WTC11 (cell line): ENCODE measurements at regions of chr16 and their contacts with region 1.

Region 1: DNA sequence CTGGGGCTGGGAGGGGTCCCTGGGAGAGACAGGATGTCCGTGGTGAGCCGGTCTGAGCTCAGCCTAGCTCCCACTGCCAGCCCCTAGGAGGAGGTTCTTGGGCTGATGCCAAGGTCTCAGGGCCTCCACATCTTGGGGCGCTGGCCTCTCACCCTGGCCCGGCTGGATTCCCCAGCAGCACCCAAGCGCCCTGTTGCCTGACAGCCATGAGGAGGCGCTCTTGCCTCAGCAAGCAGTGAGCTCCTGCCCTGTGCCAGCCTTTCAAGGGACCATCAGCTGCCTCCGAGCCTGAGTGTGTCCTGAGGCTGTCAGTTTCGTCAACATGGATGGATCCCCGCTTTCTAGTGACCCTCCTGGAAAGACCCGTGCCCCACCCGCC is 234.9 kb upstream of the CIBAR2 start:
- DNase-seq: peak; percentile 77
- ATAC-seq: peak; percentile 85
- H3K4me3 Mint-ChIP-seq: no peak overlapping the region
- H3K27ac Mint-ChIP-seq: no peak overlapping the region
- H3K4me1 Mint-ChIP-seq: peaks cover 10% of the 10 kb centered on the region
- H3K27me3 Mint-ChIP-seq: no peaks in the 10 kb centered on the region; the same call in 1 of the 2 replicates
- CTCF ChIP-seq: peak; percentile 63; the same call in 1 of the 2 replicates

Region 2: DNA sequence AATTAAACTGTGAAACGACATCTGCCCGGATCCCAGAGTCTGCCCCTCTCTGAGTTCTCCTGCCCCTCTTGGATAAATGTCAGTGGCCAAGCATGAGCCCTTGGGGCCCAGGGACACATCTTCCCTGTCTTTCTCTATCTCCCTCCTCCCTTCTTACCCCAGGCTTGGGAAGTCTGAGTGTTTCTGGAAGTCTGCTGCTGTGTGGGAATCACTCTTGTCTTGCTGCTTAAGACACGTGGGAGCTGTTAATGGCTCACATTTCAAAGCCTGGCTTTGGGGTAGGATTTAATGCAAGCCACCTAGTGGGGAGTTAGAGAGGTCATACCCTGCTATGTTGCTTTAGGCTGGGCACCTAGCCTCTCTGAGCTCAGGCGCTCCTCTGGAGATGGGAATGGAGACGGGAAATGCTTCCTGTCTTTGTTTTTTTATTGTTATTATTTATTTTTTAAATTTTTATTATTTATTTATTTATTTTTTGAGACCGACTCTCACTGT is 16.5 kb before region 1 on chr16:
- CTCF ChIA-PET with region 1: interaction called, 33 read pairs
- POLR2A ChIA-PET with region 1: no interaction called
- DNase-seq: no peak
- ATAC-seq: peak; percentile 32
- H3K4me3 Mint-ChIP-seq: peak overlapping the region; percentile 53
- H3K27ac Mint-ChIP-seq: peak overlapping the region; percentile 47; the same call in 1 of the 2 replicates
- H3K4me1 Mint-ChIP-seq: peaks cover 73% of the 10 kb centered on the region
- H3K27me3 Mint-ChIP-seq: peaks cover 52% of the 10 kb centered on the region
- CTCF ChIP-seq: no peak

Region 3: GRCh38 chr16:85363881-85364280 is 16.7 kb after region 1 on chr16:
- CTCF ChIA-PET with region 1: interaction called, 15 read pairs
- POLR2A ChIA-PET with region 1: no interaction called
- DNase-seq: no peak
- ATAC-seq: no peak
- H3K4me3 Mint-ChIP-seq: no peak overlapping the region
- H3K27ac Mint-ChIP-seq: no peak overlapping the region
- H3K4me1 Mint-ChIP-seq: peaks cover 23% of the 10 kb centered on the region
- H3K27me3 Mint-ChIP-seq: peaks cover 9% of the 10 kb centered on the region
- CTCF ChIP-seq: no peak

Region 4: DNA sequence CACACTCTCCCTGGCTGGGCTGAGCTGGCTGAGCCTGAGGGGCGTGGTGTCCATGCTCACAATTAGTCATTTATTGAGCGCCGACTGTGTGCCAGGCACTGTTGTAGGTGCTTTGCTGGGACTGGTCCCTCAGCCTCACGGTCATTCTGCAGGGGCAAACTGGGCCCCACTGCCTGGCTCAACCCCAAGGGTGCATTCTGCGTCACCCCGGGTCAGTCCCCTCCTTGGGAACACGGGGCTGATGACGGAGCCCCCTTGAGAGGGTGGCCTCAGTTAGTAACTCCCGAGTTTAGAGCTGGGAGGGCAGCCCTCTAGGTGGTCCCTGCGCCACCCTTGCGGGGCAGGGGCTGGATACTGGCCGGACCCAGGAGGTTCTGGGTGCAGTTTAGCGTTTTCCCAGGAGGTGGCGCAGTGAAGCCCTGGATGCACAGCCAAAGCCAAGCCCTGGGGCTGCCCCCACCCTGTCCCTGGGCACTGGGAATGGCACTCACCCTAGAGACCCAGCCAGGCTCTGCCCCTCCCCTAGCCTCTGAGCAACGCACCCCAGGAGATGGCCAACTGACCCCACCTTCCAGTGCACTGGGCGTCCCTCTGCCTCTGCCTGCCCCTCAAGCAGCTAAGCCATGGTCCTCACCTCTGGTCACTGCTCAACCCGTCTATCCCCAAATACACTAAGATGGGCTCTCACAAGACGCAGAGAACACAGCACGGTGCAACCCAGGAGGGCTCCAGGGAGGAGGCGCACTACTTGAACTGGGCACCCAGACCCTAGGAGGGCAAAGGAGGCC is 22.7 kb after region 1 on chr16:
- CTCF ChIA-PET with region 1: interaction called, 15 read pairs
- POLR2A ChIA-PET with region 1: no interaction called
- DNase-seq: peak; percentile 84
- ATAC-seq: peak; percentile 73
- H3K4me3 Mint-ChIP-seq: no peak overlapping the region
- H3K27ac Mint-ChIP-seq: no peak overlapping the region
- H3K4me1 Mint-ChIP-seq: peaks cover 21% of the 10 kb centered on the region
- H3K27me3 Mint-ChIP-seq: peaks cover 9% of the 10 kb centered on the region
- CTCF ChIP-seq: peak; percentile 85

Region 5: GRCh38 chr16:85393674-85394483 is 46.7 kb after region 1 on chr16:
- CTCF ChIA-PET with region 1: interaction called, 45 read pairs
- POLR2A ChIA-PET with region 1: no interaction called
- DNase-seq: peak; percentile 89
- ATAC-seq: peak; percentile 68
- H3K4me3 Mint-ChIP-seq: peak overlapping the region; percentile 38
- H3K27ac Mint-ChIP-seq: no peak overlapping the region
- H3K4me1 Mint-ChIP-seq: peaks cover 43% of the 10 kb centered on the region
- H3K27me3 Mint-ChIP-seq: no peaks in the 10 kb centered on the region
- CTCF ChIP-seq: peak; percentile 94

Region 6: GRCh38 chr16:85428168-85428898 is 81.1 kb after region 1 on chr16:
- CTCF ChIA-PET with region 1: interaction called, 10 read pairs
- POLR2A ChIA-PET with region 1: no interaction called
- DNase-seq: peak; percentile 63
- ATAC-seq: peak; percentile 59
- H3K4me3 Mint-ChIP-seq: no peak overlapping the region
- H3K27ac Mint-ChIP-seq: no peak overlapping the region
- H3K4me1 Mint-ChIP-seq: peaks cover 7% of the 10 kb centered on the region; the same call in 1 of the 2 replicates
- H3K27me3 Mint-ChIP-seq: no peaks in the 10 kb centered on the region
- CTCF ChIP-seq: peak; percentile 27; the same call in 1 of the 2 replicates

Region 7: GRCh38 chr16:85437166-85438055 is 90.2 kb after region 1 on chr16:
- CTCF ChIA-PET with region 1: interaction called, 11 read pairs
- POLR2A ChIA-PET with region 1: no interaction called
- DNase-seq: no peak
- ATAC-seq: peak; percentile 21
- H3K4me3 Mint-ChIP-seq: peak overlapping the region; percentile 50
- H3K27ac Mint-ChIP-seq: peak overlapping the region; percentile 51; the same call in 1 of the 2 replicates
- H3K4me1 Mint-ChIP-seq: peaks cover 39% of the 10 kb centered on the region
- H3K27me3 Mint-ChIP-seq: no peaks in the 10 kb centered on the region
- CTCF ChIP-seq: no peak